Brain microvascular endothelial cell (primary cell): ENCODE measurements at regions of chr7 and their contacts with region 1.

Region 1: GRCh38 chr7:99997545-99998137 is 17.8 kb upstream of the ZKSCAN1 start:
- DNase-seq: no peak
- H3K4me3 ChIP-seq: peak overlapping the region; percentile 52
- H3K27ac ChIP-seq: no peak overlapping the region
- H3K27me3 ChIP-seq: no peaks in the 10 kb centered on the region
- CTCF ChIP-seq: peak; percentile 44

Region 2: GRCh38 chr7:100081535-100082102 is 84.0 kb after region 1 on chr7 and contains the start of gene ZNF3:
- in situ Hi-C with region 1: loop called (anchors 25 kb)
- DNase-seq: peak; percentile 98
- H3K4me3 ChIP-seq: peak within 1 kb of the TSS; percentile 96
- H3K27ac ChIP-seq: peak within 1 kb of the TSS; percentile 77
- H3K27me3 ChIP-seq: no peaks in the 10 kb centered on the region
- CTCF ChIP-seq: peak; percentile 79

Region 3: GRCh38 chr7:100148225-100148558 is 150.6 kb after region 1 on chr7:
- in situ Hi-C with region 1: no loop called
- DNase-seq: no peak
- H3K4me3 ChIP-seq: peak overlapping the region; percentile 40
- H3K27ac ChIP-seq: no peak overlapping the region
- H3K27me3 ChIP-seq: no peaks in the 10 kb centered on the region
- CTCF ChIP-seq: no peak